Activated CD4-positive, alpha-beta T cell treated with anti-CD3 and anti-CD28 coated beads for 36 hours (primary cell): ENCODE measurements at regions of chr22 and their contacts with region 1.

Region 1: GRCh38 chr22:40436505-40437451 is 66.4 kb downstream of the SGSM3 start:
- DNase-seq: peak; percentile 26
- ATAC-seq: peak; percentile 66
- H3K4me3 Mint-ChIP-seq: no peak overlapping the region
- H3K27ac Mint-ChIP-seq: peak overlapping the region; percentile 51
- H3K4me1 Mint-ChIP-seq: peaks cover 56% of the 10 kb centered on the region
- H3K27me3 Mint-ChIP-seq: no peaks in the 10 kb centered on the region

Region 2: DNA sequence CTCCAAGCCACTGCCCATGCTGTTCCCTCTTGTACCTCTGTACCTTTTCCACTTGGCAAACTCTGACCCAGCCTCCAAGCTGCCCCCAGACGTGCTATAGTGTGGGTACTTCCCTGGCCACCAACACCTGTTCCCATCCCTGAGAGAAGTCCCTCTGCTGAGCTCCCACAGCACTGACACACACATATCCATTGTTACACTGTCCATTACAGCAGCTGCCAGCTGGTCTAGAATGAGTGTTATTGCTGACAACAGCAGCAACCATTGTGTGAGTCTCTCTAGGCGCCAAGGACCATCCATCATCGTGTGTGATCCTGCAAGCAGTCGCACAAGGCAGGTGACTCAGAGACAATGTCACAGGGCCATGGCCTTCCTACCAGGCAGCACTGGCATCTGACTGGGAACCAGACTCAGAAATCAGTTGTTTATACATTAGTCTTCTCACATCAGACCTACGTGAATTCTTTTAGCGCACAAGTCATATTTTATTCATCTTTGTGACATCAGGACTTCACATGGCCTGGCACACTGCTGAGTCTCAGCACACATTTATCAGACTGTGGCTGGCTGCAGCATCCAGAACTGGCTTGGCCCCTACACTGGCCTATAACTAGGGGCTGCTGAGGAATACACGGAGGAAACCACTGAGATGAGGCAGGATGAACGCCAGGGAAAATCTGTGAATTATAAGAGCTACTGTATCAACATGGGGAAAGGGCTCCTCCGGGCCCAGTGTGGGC is 10.0 kb before region 1 on chr22:
- CTCF ChIA-PET with region 1: interaction called, 13 read pairs
- POLR2A ChIA-PET with region 1: no interaction called
- intact Hi-C with region 1: no loop called
- DNase-seq: no peak
- ATAC-seq: no peak
- H3K4me3 Mint-ChIP-seq: no peak overlapping the region
- H3K27ac Mint-ChIP-seq: peak overlapping the region; percentile 21
- H3K4me1 Mint-ChIP-seq: peaks cover 2% of the 10 kb centered on the region
- H3K27me3 Mint-ChIP-seq: no peaks in the 10 kb centered on the region

Region 3: DNA sequence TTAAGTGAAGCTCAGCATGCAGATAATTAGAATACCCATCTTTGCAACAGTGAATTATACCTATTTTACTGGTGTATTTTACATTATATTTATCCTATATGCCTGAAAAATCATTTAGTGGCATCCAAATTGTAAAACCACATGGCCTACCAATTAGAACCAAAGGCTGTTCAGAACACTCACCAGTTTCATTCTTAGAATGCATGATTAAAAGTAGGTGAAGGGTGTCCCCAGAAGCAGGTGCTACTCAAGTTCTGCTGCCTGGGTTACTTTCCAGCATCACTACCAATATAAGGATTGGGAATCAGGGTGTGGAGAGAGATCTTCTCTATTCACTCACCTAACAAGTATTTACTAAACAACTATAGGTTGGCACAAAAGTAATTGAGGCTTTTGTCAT is 36.9 kb after region 1 on chr22:
- CTCF ChIA-PET with region 1: interaction called, 16 read pairs
- POLR2A ChIA-PET with region 1: no interaction called
- intact Hi-C with region 1: no loop called
- DNase-seq: no peak
- ATAC-seq: peak; percentile 71
- H3K4me3 Mint-ChIP-seq: no peak overlapping the region
- H3K27ac Mint-ChIP-seq: no peak overlapping the region
- H3K4me1 Mint-ChIP-seq: peaks cover 31% of the 10 kb centered on the region
- H3K27me3 Mint-ChIP-seq: no peaks in the 10 kb centered on the region

Region 4: DNA sequence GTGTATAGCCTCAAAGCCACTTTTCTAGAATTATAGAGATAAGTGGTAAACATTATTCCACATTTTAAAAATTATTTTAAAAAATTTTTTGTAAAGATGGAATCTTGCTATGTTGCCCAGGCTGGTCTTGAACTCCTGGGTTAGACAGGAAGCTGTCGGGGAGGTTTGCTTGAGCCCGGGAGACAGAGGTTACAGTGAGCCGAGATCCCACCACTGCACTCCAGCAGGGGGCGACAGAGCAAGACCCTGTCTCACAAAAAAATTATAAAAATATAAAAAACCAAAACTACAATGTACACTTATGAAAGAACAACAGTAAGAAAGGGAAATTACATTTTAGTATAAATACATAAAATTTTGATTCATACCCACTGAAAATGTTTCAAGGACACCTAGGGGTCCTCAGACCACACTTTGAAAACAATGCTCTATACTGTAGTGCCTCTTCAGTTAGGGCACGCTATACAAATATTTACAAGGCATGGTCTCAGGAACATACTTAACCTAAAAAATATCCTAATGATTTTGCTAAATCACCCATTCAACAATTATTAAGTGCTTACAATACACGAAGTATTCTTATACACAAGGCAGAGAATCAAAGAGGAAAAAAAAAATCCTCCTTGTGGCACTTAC is 88.6 kb after region 1 on chr22:
- CTCF ChIA-PET with region 1: interaction called, 14 read pairs
- POLR2A ChIA-PET with region 1: no interaction called
- intact Hi-C with region 1: loop called in 1 of 2 experiments (anchors 5 kb)
- DNase-seq: peak; percentile 87
- ATAC-seq: peak; percentile 65
- H3K4me3 Mint-ChIP-seq: no peak overlapping the region
- H3K27ac Mint-ChIP-seq: peak overlapping the region; percentile 16
- H3K4me1 Mint-ChIP-seq: peaks cover 53% of the 10 kb centered on the region
- H3K27me3 Mint-ChIP-seq: no peaks in the 10 kb centered on the region

Region 5: DNA sequence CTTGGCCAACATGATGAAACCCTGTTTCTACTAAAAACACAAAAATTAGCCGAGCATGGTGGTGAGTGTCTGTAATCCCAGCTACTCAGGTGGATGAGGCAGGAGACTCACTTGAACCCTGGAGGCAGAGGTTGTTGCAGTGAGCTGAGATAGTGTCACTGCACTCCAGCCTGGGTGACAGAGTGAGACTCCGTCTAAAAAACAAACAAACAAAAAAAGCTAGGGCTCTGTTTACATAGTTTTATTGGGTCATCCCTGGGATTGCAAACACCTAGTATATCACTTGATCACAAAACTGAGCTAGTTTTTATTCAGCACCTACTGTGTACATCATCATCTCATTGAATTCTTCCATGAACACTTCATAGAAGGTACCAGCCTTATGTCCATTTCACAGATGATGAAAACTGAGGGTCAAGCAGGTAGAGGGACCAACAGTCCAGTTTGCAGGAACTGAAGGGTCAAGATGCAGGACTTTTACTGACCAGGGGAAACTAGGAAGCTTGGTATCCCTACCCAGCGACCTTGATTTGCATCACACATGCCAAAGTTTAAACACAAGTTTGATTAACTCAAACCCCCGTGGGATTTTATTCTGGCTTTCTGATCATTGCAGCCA is 208.9 kb after region 1 on chr22:
- CTCF ChIA-PET with region 1: interaction called, 79 read pairs
- POLR2A ChIA-PET with region 1: interaction called, 6 read pairs
- intact Hi-C with region 1: loop called (anchors 1 kb)
- DNase-seq: no peak
- ATAC-seq: no peak
- H3K4me3 Mint-ChIP-seq: no peak overlapping the region
- H3K27ac Mint-ChIP-seq: no peak overlapping the region
- H3K4me1 Mint-ChIP-seq: peaks cover 16% of the 10 kb centered on the region
- H3K27me3 Mint-ChIP-seq: no peaks in the 10 kb centered on the region

Region 6: DNA sequence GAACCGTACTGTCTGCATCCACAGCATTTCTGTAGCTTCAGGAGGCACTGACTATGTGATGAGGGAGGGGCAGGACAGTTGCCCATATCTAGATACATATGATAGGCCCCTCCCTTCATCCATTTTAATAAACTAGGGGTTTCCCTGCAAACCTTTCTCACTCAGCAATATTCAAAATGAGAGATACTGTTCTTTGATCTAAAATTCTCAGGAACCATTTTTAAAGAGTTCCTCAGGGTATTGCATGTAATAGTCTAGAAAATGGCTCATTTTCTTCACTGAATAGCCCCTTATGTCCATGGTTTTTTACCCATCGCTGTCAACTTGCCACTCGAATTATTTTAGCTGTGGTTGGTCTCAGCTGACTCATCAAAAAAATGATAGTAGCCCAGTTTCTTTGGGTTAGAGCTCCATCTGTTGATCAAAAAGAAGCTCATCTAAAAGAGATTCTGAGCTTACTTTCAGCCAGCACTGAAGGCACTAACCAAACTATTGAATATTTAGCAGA is 462.1 kb after region 1 on chr22:
- CTCF ChIA-PET with region 1: interaction called, 15 read pairs
- POLR2A ChIA-PET with region 1: no interaction called
- intact Hi-C with region 1: loop called (anchors 2 kb)
- DNase-seq: peak; percentile 38
- ATAC-seq: peak; percentile 94
- H3K4me3 Mint-ChIP-seq: peak overlapping the region; percentile 15
- H3K27ac Mint-ChIP-seq: peak overlapping the region; percentile 81
- H3K4me1 Mint-ChIP-seq: peaks cover 14% of the 10 kb centered on the region
- H3K27me3 Mint-ChIP-seq: no peaks in the 10 kb centered on the region

Region 7: GRCh38 chr22:41301105-41302020 is 864.6 kb after region 1 on chr22 and contains the start of gene ZC3H7B:
- CTCF ChIA-PET with region 1: no interaction called
- POLR2A ChIA-PET with region 1: no interaction called
- intact Hi-C with region 1: no loop called
- DNase-seq: peak; percentile 92
- ATAC-seq: peak; percentile 96
- H3K4me3 Mint-ChIP-seq: peak within 1 kb of the TSS; percentile 74
- H3K27ac Mint-ChIP-seq: peak within 1 kb of the TSS; percentile 76
- H3K4me1 Mint-ChIP-seq: peaks cover 31% of the 10 kb centered on the region
- H3K27me3 Mint-ChIP-seq: no peaks in the 10 kb centered on the region
- total RNA-seq, gene ZC3H7B: 41.7 to 43.4 TPM